Testis (tissue), 5 donors: ENCODE measurements at regions of chr14 and their contacts with region 1.

Region 1: DNA sequence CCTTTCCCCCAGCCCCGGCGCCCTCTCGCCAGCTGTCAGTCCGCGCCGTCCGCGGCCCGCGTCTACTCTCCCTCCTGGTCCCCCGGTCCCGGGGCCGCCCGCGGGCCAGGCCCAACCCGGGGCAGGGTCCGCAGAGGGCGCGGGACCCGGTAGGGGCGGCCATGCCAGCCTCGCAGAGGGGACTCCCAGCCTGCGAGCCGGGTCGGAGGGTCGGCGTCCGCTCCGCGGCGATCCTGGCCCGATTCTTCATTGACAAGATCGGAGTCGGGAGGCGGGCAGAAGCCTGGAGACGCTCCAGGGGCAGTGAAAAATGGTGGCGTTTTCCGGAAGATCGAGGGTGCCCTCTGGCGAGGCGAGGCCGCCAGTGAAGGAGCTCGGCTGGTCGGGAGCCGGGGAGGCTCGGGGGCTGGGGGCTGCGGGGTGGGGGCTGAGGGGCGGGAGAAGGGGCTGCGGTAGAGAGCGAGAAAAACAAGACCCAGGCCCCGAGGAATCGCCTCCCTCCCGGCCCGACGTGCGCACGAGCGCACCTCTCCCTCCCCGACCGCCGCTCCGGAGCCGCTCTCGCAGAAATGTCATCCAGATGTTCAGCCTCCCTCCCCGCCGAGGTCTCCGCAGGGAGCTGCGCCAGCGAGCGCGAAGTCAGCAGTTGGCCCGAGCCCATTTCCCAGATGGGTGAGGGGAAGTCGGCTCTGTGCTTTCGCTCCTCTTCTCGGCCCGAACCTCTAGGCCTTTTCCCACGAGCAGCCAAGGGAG is 647 bp upstream of the TGFB3 start:
- DNase-seq: peak; percentile 88
- H3K4me3 ChIP-seq: peak overlapping the region; percentile 65 to 70
- H3K27ac ChIP-seq: peak overlapping the region; percentile 88 to 95
- H3K4me1 ChIP-seq: peaks cover 22% of the 10 kb centered on the region
- H3K27me3 ChIP-seq: no peaks in the 10 kb centered on the region
- CTCF ChIP-seq: peak in 2 of 3 experiments; percentile 48 to 69
- POLR2A ChIP-seq: no peak

Region 2: GRCh38 chr14:75715926-75716780 is 266.3 kb before region 1 on chr14:
- intact Hi-C with region 1: loop called (anchors 5 kb)
- DNase-seq: no peak
- H3K4me3 ChIP-seq: no peak overlapping the region
- H3K27ac ChIP-seq: peak overlapping the region in 1 of 2 donors; percentile 28
- H3K4me1 ChIP-seq: peaks cover 30% of the 10 kb centered on the region
- H3K27me3 ChIP-seq: no peaks in the 10 kb centered on the region
- CTCF ChIP-seq: no peak
- POLR2A ChIP-seq: no peak

Region 3: DNA sequence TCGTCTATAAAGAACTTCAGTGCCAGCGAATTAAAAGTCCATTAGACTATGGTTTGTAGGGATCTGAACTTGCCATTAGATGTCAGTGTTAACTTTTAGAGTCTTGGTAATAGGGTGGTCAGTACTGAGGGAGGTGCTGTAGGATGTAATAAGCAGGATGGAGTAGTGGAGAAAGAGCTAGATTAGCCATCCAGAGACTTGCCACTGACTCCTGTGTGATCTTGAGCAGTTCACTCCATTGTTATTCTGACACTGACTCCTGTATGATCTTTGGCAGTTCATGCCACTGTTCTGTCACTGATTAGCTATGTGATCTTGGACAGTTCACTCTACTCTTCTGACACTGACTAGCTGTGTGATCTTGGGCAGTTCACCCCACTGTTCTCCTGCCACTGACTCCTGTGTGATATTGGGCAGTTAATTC is 187.8 kb before region 1 on chr14:
- intact Hi-C with region 1: loop called (anchors 10 kb)
- DNase-seq: no peak
- H3K4me3 ChIP-seq: no peak overlapping the region
- H3K27ac ChIP-seq: no peak overlapping the region
- H3K4me1 ChIP-seq: no peaks in the 10 kb centered on the region
- H3K27me3 ChIP-seq: no peaks in the 10 kb centered on the region
- CTCF ChIP-seq: no peak
- POLR2A ChIP-seq: no peak

Region 4: DNA sequence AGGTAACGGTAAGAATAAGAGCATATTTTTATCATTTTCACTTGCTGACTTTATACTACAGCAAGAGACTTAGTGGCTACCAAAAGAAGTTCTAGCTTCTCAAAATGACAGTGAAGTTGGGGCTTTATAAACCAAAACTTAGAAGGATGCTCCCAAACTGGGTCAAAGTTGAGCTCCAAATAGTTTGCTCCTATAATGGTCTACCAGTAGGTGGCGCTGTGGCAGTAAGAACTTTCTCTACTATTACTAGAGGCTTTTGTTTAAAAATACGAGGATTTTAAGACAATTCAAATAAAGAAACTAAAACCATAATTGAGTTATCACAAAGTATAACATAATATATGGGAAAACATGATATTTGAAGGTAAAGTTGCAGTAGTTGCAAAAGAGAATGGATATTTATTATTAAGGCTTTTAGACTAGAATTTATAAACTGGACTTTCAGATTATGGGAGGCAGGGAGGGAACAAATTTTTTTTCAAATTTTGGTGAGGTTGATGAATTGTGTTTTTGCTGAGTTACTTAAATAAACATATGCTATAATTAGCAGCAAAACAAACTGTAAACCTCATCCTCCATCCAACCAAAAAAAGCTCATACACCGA is 75.7 kb before region 1 on chr14:
- intact Hi-C with region 1: loop called (anchors 10 kb)
- DNase-seq: peak; percentile 82
- H3K4me3 ChIP-seq: no peak overlapping the region
- H3K27ac ChIP-seq: no peak overlapping the region
- H3K4me1 ChIP-seq: peaks cover 15% of the 10 kb centered on the region
- H3K27me3 ChIP-seq: no peaks in the 10 kb centered on the region
- CTCF ChIP-seq: peak; percentile 84 to 98 (median 87)
- POLR2A ChIP-seq: no peak